Ovary (tissue), 10 donors: ENCODE measurements at regions of chr6 and their contacts with region 1.

Region 1: GRCh38 chr6:29456971-29457370 is at the starts of genes OR11A1 and OR2H1:
- DNase-seq: no peak
- H3K4me3 ChIP-seq: no peak within 1 kb of the TSS
- H3K27ac ChIP-seq: no peak within 1 kb of the TSS
- H3K4me1 ChIP-seq: no peaks in the 10 kb centered on the region
- H3K27me3 ChIP-seq: no peaks in the 10 kb centered on the region
- CTCF ChIP-seq: no peak
- EP300 ChIP-seq: no peak
- POLR2A ChIP-seq: no peak
- total RNA-seq, gene OR11A1: not detected
- total RNA-seq, gene OR2H1: not detected

Region 2: DNA sequence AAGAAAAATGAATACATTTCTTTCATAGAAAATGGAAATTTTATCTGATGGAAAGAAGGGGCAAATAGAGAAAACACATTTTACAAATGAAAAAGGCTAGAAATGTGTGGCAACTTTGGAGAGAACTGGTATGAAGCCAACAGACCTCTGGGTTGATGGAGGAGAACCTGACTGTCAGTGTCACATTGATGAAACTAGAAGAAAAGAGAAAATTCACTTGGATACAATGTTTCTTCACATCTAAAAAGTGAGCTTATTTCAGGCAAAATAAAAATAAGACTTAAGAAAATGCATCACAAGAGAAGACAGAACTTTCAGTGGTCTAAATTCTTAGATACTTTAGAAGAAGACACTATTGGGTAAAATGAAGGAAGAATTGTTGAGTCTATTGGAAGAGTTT is 61.6 kb before region 1 on chr6 and contains the start of gene OR12D2:
- intact Hi-C with region 1: loop called in 1 of 4 experiments (anchors 2 kb)
- DNase-seq: no peak
- H3K4me3 ChIP-seq: no peak within 1 kb of the TSS
- H3K27ac ChIP-seq: no peak within 1 kb of the TSS
- H3K4me1 ChIP-seq: no peaks in the 10 kb centered on the region
- H3K27me3 ChIP-seq: no peaks in the 10 kb centered on the region
- CTCF ChIP-seq: no peak
- EP300 ChIP-seq: no peak
- POLR2A ChIP-seq: no peak
- total RNA-seq, gene OR12D2: 0.24 TPM in 1 of 7 donors, not detected in the others

Region 3: DNA sequence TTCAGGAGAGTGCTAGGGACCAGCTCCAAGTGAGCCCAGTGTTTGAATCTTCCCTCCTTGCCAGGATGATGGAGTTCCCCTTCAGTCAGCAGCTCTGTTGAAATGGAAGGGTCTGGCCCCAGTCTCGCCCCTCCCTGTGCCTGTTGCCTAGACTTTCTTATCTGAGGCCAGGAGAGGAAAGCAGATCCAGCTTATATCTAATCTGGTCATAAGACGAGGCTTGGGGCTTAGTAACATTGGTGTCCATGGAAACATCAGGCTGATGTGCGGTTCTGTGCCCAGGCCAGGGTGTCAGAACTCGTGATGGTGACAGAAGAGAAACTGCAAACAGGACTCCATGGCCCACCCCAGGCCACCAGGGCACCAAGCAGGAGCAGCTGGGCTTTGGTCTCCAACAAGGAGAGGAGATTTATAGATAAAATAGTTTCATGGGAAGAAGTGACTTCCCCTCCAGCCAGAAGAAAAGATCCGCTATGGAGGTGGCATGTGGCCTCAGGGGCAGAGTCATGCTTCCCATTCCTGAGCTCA is 21.0 kb after region 1 on chr6:
- intact Hi-C with region 1: no loop called
- DNase-seq: no peak
- H3K4me3 ChIP-seq: no peak overlapping the region
- H3K27ac ChIP-seq: no peak overlapping the region
- H3K4me1 ChIP-seq: no peaks in the 10 kb centered on the region
- H3K27me3 ChIP-seq: no peaks in the 10 kb centered on the region
- CTCF ChIP-seq: no peak
- EP300 ChIP-seq: no peak
- POLR2A ChIP-seq: no peak

Region 4: GRCh38 chr6:29628419-29629281 is 171.7 kb after region 1 on chr6:
- intact Hi-C with region 1: no loop called
- DNase-seq: peak; percentile 78 to 86 (median 85)
- H3K4me3 ChIP-seq: peak overlapping the region; percentile 56
- H3K27ac ChIP-seq: peak overlapping the region; percentile 47 to 78
- H3K4me1 ChIP-seq: peaks cover 11% of the 10 kb centered on the region
- H3K27me3 ChIP-seq: no peaks in the 10 kb centered on the region
- CTCF ChIP-seq: peak; percentile 45 to 67 (median 59)
- EP300 ChIP-seq: no peak
- POLR2A ChIP-seq: peak; percentile 10